Endothelial cell of umbilical vein (primary cell): ENCODE measurements at regions of chr5 and their contacts with region 1.

Region 1: DNA sequence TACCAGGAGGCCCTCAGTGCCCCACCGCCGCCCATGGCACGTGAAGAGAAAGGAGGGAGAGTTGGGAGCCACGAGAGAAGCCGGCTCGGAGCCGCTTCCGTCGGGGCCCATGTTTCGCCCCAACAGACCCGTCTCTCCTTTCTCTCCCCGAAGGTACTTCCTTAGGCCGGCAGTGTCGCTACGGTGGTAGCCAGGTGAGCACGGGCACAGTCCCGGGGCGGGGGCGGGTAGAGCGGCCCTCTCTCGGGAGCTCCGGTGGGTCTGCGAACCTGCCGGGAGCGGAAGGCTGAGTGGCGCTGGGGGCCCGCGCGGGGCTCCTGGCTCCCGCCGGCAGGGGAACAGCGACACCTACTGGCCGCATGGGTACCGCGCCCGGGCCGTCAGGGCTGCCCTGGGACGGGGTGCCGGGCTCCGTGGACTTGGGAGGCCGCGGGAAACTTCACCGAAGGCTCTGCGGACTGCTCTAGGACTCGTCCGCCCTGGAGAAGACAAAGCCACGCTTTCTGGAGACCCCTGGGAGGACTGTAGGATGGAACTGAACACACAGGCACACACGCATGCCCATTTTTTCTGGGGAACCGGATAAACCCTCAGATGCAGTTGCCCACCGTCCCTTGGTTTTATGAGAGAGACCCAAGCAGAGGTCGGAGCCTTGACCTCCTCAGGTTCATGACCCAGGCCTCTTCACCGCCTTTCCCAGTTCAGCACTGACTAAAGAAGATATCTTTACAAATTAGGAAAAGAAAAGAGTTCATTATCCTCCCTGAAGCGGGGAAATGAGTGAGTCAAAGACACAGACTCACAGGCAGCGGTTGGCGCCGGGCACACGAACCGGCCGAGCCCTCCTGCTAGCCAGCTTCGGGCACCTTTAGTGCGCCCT is 202.5 kb downstream of the MEF2C start:
- DNase-seq: peak; percentile 37
- H3K4me3 ChIP-seq: peak overlapping the region in 1 of 3 experiments; percentile 34
- H3K27ac ChIP-seq: no peak overlapping the region
- H3K4me1 ChIP-seq: peaks cover 8% of the 10 kb centered on the region
- H3K27me3 ChIP-seq: peaks cover 83 to 99% of the 10 kb centered on the region in 2 experiments
- CTCF ChIP-seq: peak; percentile 90 to 97
- POLR2A ChIP-seq: no peak

Region 2: DNA sequence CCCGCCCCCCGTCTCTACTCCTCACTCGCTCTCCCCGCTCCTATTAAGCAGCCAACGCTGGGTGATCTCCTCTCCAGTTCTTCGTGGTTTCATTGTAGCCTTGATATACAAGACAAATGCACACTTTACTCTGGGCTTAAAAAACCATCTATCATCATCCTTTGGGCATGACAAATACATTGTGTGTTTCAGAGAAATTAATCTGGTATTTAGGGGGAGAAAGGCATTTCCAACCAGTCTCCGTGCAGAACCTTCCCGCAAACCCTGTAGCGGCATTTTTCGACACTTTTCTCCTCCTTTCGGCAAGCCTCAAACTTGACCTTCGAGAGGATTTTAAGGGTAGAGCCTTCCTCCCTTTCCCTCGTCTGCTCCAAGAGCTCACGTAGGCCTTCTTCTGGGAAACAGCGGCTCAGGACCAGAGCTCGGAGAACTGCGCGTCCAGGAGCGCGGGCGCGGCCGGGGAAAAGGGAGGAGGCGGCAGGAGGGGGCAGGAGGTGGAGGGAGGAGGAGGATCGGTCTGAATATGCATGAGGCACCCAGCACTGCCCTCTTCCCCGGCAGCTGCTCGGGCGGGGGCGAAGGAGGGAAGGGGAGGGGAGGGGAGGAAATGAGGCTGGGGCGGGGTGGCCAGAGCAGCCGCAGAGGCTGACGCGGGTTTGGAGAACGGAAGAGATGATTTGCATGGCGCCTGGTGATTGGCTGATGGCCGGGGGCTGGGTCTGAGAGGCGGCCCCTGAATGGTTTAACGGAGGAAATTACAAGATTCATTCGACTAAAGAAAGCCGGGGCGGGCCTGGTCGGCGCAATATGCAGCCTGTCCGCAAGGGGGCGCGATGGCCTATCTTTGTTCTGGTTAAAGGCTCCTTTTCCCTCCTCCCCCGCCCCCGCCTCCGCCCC is 539.4 kb before region 1 on chr5:
- CTCF ChIA-PET with region 1: interaction called, 7 read pairs
- POLR2A ChIA-PET with region 1: no interaction called
- dilution Hi-C with region 1: loop called (anchors 25 kb)
- intact Hi-C with region 1: loop called (anchors 1 kb)
- DNase-seq: peak; percentile 96
- H3K4me3 ChIP-seq: peak overlapping the region; percentile 31 to 75 (median 38)
- H3K27ac ChIP-seq: no peak overlapping the region
- H3K4me1 ChIP-seq: peaks cover 12% of the 10 kb centered on the region
- H3K27me3 ChIP-seq: peaks cover 58 to 78% of the 10 kb centered on the region in 2 experiments
- CTCF ChIP-seq: peak; percentile 55 to 82
- POLR2A ChIP-seq: no peak

Region 3: DNA sequence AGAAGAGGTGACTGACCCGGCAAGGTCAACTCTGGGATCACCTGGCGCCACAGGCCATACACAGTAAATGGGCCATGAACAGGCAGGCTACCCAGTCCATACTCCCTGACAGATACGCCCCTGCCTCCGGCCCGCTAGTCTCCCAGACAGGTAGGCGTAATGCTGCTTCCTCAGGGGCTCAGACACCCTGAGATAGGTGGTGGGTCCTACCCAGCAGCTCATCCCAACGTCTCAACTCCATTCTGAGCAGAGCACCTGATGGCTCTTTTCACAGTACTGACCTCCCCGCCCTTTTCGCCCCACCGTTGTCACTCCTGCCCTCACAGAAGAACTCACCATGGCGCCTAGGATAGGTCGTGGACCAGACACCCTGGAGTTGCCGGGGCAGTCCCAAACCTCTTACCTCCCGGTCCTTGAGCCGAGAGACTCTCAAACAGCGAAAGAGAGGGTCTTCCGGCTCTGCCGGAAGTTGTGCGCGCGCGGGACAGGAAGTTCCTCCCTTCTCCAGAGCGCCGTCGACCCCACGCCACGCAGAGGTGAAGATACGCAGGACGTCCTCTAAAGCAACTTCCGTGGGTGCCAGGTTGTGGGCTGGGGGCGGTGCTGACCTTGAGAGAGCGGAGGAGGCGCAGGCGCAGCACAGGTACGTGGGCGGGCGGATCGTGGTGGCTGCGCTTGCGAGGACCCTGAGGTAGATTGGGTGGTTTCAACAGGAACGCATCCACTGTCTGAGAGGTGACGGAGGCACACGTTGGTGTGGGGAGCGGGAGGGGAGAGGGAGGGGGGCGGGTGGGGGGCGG is 411.9 kb before region 1 on chr5 and contains the start of gene TMEM161B:
- CTCF ChIA-PET with region 1: no interaction called
- POLR2A ChIA-PET with region 1: no interaction called
- dilution Hi-C with region 1: no loop called
- intact Hi-C with region 1: loop called (anchors 10 kb)
- DNase-seq: peak; percentile 84
- H3K4me3 ChIP-seq: peak within 1 kb of the TSS; percentile 59 to 91 (median 86)
- H3K27ac ChIP-seq: peak within 1 kb of the TSS; percentile 4
- H3K4me1 ChIP-seq: peaks cover 11% of the 10 kb centered on the region
- H3K27me3 ChIP-seq: no peaks in the 10 kb centered on the region
- CTCF ChIP-seq: no peak
- POLR2A ChIP-seq: peak; percentile 72
- total RNA-seq, gene TMEM161B: 11.5 and 11.6 TPM in 2 replicates

Region 4: DNA sequence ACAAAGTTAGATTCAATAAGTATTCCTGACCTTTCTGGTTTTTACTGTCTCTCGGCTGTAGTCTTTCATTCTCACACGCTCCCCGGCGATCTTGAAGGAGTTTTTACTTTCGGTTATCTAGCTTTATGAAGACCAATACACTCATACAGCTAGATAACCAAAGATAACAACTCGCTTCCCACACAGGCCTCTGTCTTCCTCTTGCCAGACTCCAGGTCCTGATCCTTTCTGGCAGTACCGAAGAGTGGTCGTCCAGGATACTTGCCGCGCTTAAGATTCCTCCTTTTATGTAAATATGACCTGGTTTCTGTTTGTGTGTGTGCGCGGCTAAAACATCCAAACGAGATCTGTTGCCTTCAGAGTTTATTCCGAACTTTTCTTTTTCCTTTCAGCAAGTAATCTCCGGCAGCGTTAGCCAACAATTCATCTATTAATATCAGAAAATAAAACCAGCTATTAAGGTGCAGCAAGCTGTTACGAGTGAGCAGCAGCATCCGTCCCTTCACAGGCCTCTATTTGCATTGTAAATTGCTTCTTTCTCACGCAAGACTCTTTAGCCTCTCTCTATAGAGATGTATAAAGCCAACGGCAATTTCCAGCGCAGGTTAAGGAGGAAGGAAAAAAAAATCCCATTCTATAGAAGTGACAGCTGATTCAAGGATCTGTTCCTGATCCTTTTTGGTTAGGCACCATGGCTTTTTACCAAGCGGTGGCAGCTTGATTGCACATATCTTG is 13.6 kb before region 1 on chr5:
- CTCF ChIA-PET with region 1: no interaction called
- POLR2A ChIA-PET with region 1: no interaction called
- dilution Hi-C with region 1: no loop called
- intact Hi-C with region 1: loop called (anchors 1 kb)
- DNase-seq: peak; percentile 39
- H3K4me3 ChIP-seq: peak overlapping the region in 1 of 3 experiments; percentile 40
- H3K27ac ChIP-seq: no peak overlapping the region
- H3K4me1 ChIP-seq: peaks cover 6% of the 10 kb centered on the region
- H3K27me3 ChIP-seq: peaks cover 71 to 100% of the 10 kb centered on the region in 2 experiments
- CTCF ChIP-seq: no peak
- POLR2A ChIP-seq: no peak